Psoas muscle (tissue), 8 donors: ENCODE measurements at regions of chr14 and their contacts with region 1.

Region 1: DNA sequence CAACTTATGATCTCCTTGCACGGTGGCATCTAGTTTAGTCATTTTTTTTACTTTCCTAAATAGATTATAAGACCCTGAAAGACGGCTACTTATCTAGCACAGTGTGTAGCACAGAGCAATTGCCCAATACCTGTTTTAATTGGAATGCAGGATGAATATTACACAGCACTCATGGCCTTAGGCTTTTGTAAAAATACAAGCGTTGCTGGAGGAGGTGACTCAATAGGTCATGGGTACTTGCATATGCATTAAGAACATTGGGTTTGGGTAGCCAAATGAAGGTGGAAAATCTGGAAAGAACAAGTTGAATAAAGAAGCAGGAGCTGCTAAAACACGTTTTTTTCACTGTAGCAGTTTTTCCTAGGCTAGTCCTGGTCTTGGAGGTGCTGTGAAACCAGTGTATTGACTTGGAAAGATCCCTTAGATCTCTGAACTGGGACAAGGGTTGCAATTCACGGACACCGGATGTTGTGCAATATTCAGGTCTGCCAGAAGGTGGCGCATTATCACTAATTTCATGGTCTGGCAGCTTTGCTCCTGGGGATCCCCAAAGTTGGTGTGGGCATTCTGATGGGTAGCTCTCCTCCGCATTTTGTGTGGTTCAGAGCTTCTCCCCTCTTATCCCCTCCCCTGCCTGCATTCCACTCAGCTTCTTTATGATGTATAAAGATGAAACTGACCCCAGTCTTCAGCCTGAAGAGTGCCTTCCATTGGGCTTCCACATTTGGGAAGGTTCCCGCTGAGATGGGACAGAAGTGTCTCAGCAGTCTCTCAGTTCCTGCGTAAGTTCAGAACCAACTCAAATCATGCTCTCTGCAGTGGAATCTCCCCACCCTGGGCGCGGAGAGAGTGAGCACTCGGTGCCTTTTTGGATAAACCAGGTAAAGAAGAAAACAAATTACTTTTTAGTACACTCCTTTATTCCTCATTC is 278.3 kb downstream of the NRXN3 start:
- DNase-seq: peak in 1 of 2 donors; percentile 15
- ATAC-seq: peak; percentile 61 to 82 (median 65)
- H3K4me3 ChIP-seq: no peak overlapping the region
- H3K27ac ChIP-seq: no peak overlapping the region
- H3K4me1 ChIP-seq: no peaks in the 10 kb centered on the region
- H3K27me3 ChIP-seq: no peaks in the 10 kb centered on the region
- CTCF ChIP-seq: peak; percentile 69

Region 2: GRCh38 chr14:78566026-78566858 is 117.8 kb after region 1 on chr14:
- intact Hi-C with region 1: loop called (anchors 1 to 2 kb)
- DNase-seq: peak; percentile 67 to 82
- ATAC-seq: peak; percentile 92 to 99 (median 98)
- H3K4me3 ChIP-seq: peak overlapping the region; percentile 61
- H3K27ac ChIP-seq: peak overlapping the region; percentile 73
- H3K4me1 ChIP-seq: no peaks in the 10 kb centered on the region
- H3K27me3 ChIP-seq: no peaks in the 10 kb centered on the region
- CTCF ChIP-seq: peak; percentile 75

Region 3: DNA sequence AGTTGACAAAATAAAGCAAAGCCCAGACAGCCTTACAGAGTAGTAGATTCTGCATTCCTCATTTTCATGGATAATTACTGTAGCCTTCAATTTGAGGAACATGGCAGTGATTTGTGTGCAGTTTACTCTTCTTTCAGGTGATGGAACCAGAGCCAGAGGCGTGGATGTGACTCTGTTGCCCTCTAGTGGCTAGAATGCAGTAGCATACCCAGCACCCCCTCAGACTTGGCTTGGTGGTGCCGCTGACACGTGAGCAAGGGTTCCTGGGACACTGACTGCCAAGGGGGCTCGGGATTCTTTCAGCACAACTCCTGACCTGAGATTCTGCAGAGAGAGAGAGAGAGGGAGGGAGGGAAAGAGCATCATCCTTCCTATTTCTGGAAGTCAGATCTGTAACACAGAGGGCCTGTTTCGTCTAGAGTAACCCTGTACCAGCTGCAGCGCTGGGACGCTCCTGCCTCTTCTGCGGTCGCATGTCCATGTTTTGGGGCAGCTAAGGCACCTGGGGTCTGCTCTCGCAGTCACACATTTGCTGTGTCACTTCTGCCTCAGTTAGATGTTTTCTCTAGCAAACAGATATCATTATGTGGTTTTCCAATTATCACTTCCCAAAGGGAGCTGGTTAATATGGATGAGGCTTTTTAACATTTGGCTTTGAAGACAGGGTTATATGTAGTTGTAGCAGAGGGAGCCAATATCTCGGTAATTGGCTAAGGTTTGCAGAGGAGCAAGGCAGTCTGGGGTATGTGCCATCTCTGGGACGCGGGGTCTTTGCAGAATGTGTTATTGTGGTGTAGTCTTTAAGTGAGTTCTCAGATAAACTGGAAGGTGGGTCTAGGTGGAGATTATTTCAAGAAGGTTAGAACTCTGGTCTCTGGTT is 149.9 kb after region 1 on chr14:
- intact Hi-C with region 1: loop called (anchors 2 to 10 kb)
- DNase-seq: peak; percentile 27 to 54
- ATAC-seq: peak; percentile 71 to 89 (median 86)
- H3K4me3 ChIP-seq: no peak overlapping the region
- H3K27ac ChIP-seq: no peak overlapping the region
- H3K4me1 ChIP-seq: no peaks in the 10 kb centered on the region
- H3K27me3 ChIP-seq: no peaks in the 10 kb centered on the region
- CTCF ChIP-seq: peak; percentile 82

Region 4: DNA sequence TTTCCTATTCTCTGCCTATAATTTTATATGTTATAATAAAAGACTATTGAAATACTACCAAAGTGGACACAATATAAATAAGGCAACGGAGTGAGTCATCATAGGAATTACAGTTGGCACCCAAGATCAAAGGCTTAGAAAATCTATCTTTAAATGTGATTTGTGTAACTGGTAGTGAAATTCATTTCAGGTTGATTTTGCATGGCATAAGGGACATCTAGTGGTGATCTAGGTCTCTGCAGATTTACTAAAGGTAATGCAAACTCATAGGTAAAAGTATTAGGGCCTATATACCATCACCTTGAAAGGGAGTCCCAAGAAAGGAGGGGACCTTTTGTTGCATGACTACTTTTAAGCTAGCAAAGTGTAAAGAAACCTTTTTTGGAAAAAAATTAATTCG is 248.9 kb after region 1 on chr14:
- intact Hi-C with region 1: loop called in 1 of 2 experiments (anchors 5 kb)
- DNase-seq: no peak
- ATAC-seq: no peak
- H3K4me3 ChIP-seq: no peak overlapping the region
- H3K27ac ChIP-seq: no peak overlapping the region
- H3K4me1 ChIP-seq: no peaks in the 10 kb centered on the region
- H3K27me3 ChIP-seq: no peaks in the 10 kb centered on the region
- CTCF ChIP-seq: peak; percentile 48

Region 5: DNA sequence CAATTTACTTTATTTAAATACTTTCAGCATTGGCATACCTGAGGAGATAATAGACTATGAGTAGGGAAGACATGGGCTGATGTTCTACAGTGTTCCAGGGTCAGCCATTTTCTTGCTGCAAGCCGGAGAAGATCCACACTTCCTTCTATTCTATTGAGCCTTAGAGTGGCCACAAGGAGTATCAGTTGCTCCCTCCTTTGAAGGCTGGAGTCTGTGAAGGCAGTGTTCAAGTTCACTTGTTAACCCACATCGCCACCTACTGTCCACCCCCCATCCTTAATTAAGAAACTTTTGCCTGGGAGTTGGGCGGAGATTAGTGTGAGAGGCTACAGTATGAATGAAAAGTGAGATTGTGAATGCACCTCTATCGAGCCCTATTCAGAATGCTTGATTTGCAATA is 388.3 kb after region 1 on chr14:
- intact Hi-C with region 1: loop called in 1 of 2 experiments (anchors 10 kb)
- DNase-seq: peak in 1 of 2 donors; percentile 12
- ATAC-seq: peak in 3 of 4 donors; percentile 55 to 70 (median 61)
- H3K4me3 ChIP-seq: no peak overlapping the region
- H3K27ac ChIP-seq: no peak overlapping the region
- H3K4me1 ChIP-seq: no peaks in the 10 kb centered on the region
- H3K27me3 ChIP-seq: peaks cover 0 to 6% (median 0%) of the 10 kb centered on the region in 3 donors
- CTCF ChIP-seq: peak; percentile 38